ENCODE measurements at regions of chr9 and their contacts with region 1.

Region 1: DNA sequence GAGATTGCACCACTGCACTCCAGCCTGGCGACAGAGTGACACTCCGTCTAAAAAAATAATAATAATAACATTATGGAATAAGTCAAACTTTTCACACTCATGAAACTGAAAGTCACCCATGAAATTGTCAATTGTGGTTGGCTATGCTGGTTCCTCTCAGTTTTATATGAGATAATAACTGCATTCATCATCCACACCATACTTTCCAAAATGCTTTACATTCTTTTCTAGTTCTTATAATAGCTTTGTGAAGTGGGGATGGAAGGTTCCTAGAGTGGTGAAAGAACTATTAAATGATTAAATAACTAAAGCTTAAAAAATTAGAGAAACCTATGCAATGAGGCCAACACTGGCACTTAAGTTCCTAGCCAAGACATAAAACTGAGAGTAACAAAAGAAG is 12.6 kb upstream of the ASPN start:
- DNase-seq: no peak
- ATAC-seq: no peak
- H3K4me3 ChIP-seq: no peak overlapping the region
- H3K27ac ChIP-seq: no peak overlapping the region
- H3K4me1 ChIP-seq: no peaks in the 10 kb centered on the region
- H3K27me3 ChIP-seq: no peaks in the 10 kb centered on the region
- CTCF ChIP-seq: no peak

Region 2: DNA sequence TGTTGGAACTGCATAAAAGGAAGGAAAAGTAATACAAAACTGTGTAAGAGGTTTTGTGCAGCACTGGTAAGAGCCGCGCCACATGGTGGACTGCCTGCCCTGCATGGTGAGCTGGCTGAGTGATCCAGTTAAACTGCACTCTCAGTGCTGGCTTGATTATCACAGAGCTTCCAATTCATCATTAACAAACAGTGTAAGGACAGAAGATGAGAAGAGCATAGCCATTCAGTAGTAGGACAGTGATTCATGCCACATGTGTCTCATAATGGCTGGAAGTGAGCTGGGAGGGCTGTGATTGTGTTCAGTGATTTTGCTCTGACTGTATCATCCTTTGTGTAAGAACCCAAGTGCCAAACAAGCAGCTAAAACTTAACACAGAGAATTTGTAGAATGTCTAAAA is 26.6 kb before region 1 on chr9:
- CTCF ChIA-PET with region 1: no interaction called
- POLR2A ChIA-PET with region 1: no interaction called
- intact Hi-C with region 1: loop called (anchors 1 kb)
- DNase-seq: no peak
- ATAC-seq: no peak
- H3K4me3 ChIP-seq: no peak overlapping the region
- H3K27ac ChIP-seq: no peak overlapping the region
- H3K4me1 ChIP-seq: no peaks in the 10 kb centered on the region
- H3K27me3 ChIP-seq: no peaks in the 10 kb centered on the region
- CTCF ChIP-seq: no peak

Measured in PC-3 (cell line).